ENCODE measurements at regions of chr3 and their contacts with region 1.

Region 1: GRCh38 chr3:31077021-31077601 is 182.7 kb upstream of the GADL1 start:
- DNase-seq: peak; percentile 35
- H3K4me3 Mint-ChIP-seq: peak overlapping the region; percentile 38
- H3K27ac Mint-ChIP-seq: peak overlapping the region; percentile 85
- H3K4me1 Mint-ChIP-seq: peaks cover 46% of the 10 kb centered on the region
- H3K27me3 Mint-ChIP-seq: peaks cover 3% of the 10 kb centered on the region

Region 2: GRCh38 chr3:30384546-30385072 is 692.5 kb before region 1 on chr3:
- intact Hi-C with region 1: no loop called
- DNase-seq: no peak
- H3K4me3 Mint-ChIP-seq: no peak overlapping the region
- H3K27ac Mint-ChIP-seq: no peak overlapping the region
- H3K4me1 Mint-ChIP-seq: no peaks in the 10 kb centered on the region
- H3K27me3 Mint-ChIP-seq: peaks cover 5% of the 10 kb centered on the region

Region 3: DNA sequence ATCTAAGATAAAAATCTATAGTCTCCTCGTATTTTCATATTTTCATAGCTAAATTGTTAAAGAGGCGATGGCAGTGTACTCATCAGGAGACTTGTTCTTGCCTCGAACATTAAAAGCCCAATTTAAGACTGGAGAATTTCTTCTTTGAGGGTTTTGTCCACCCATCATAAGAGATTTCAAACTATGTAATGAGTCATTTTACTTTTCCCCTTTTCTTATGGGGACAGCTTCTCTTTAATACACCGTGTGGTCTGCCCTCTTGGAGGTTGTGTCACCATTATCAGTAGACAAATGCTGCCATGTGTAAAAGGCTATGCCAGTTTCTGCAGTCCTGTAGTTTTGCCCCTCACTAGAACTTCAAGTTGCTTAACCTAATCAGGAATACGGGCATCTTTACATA is 453.8 kb before region 1 on chr3:
- intact Hi-C with region 1: loop called (anchors 5 kb)
- DNase-seq: no peak
- H3K4me3 Mint-ChIP-seq: peak overlapping the region; percentile 66
- H3K27ac Mint-ChIP-seq: peak overlapping the region; percentile 90
- H3K4me1 Mint-ChIP-seq: peaks cover 83% of the 10 kb centered on the region
- H3K27me3 Mint-ChIP-seq: no peaks in the 10 kb centered on the region

Region 4: GRCh38 chr3:30708472-30708871 is 368.6 kb before region 1 on chr3:
- intact Hi-C with region 1: no loop called
- DNase-seq: no peak
- H3K4me3 Mint-ChIP-seq: no peak overlapping the region
- H3K27ac Mint-ChIP-seq: no peak overlapping the region
- H3K4me1 Mint-ChIP-seq: peaks cover 14% of the 10 kb centered on the region
- H3K27me3 Mint-ChIP-seq: no peaks in the 10 kb centered on the region

Region 5: GRCh38 chr3:31105438-31106077 is 28.4 kb after region 1 on chr3:
- intact Hi-C with region 1: loop called (anchors 1 kb)
- DNase-seq: peak; percentile 17
- H3K4me3 Mint-ChIP-seq: no peak overlapping the region
- H3K27ac Mint-ChIP-seq: peak overlapping the region; percentile 49
- H3K4me1 Mint-ChIP-seq: peaks cover 55% of the 10 kb centered on the region
- H3K27me3 Mint-ChIP-seq: no peaks in the 10 kb centered on the region

Region 6: GRCh38 chr3:31213869-31214486 is 136.9 kb after region 1 on chr3:
- intact Hi-C with region 1: loop called (anchors 2 kb)
- DNase-seq: peak; percentile 53
- H3K4me3 Mint-ChIP-seq: peak overlapping the region; percentile 43
- H3K27ac Mint-ChIP-seq: peak overlapping the region; percentile 81
- H3K4me1 Mint-ChIP-seq: peaks cover 94% of the 10 kb centered on the region
- H3K27me3 Mint-ChIP-seq: no peaks in the 10 kb centered on the region

Region 7: GRCh38 chr3:31253782-31254181 is 176.7 kb after region 1 on chr3:
- intact Hi-C with region 1: loop called (anchors 1 kb)
- DNase-seq: no peak
- H3K4me3 Mint-ChIP-seq: no peak overlapping the region
- H3K27ac Mint-ChIP-seq: peak overlapping the region; percentile 89
- H3K4me1 Mint-ChIP-seq: peaks cover 64% of the 10 kb centered on the region
- H3K27me3 Mint-ChIP-seq: peaks cover 3% of the 10 kb centered on the region

Region 8: GRCh38 chr3:31754575-31755278 is 677.6 kb after region 1 on chr3:
- intact Hi-C with region 1: loop called (anchors 1 kb)
- DNase-seq: no peak
- H3K4me3 Mint-ChIP-seq: peak overlapping the region; percentile 66
- H3K27ac Mint-ChIP-seq: peak overlapping the region; percentile 94
- H3K4me1 Mint-ChIP-seq: peaks cover 61% of the 10 kb centered on the region
- H3K27me3 Mint-ChIP-seq: no peaks in the 10 kb centered on the region

Region 9: GRCh38 chr3:31925271-31925630 is 848.1 kb after region 1 on chr3:
- intact Hi-C with region 1: loop called (anchors 2 kb)
- DNase-seq: no peak
- H3K4me3 Mint-ChIP-seq: peak overlapping the region; percentile 7
- H3K27ac Mint-ChIP-seq: peak overlapping the region; percentile 21
- H3K4me1 Mint-ChIP-seq: peaks cover 37% of the 10 kb centered on the region
- H3K27me3 Mint-ChIP-seq: no peaks in the 10 kb centered on the region